Common myeloid progenitor, CD34-positive (primary cell): ENCODE measurements at regions of chr10 and their contacts with region 1.

Region 1: GRCh38 chr10:6401562-6402348 is 178.3 kb downstream of the PRKCQ start:
- DNase-seq: peak; percentile 74 to 82 (median 78)
- H3K4me3 ChIP-seq: peak overlapping the region in 5 of 7 experiments; percentile 7 to 70 (median 46)
- H3K27ac ChIP-seq: no peak overlapping the region
- H3K4me1 ChIP-seq: peaks cover 19 to 35% (median 30%) of the 10 kb centered on the region in 4 experiments
- H3K27me3 ChIP-seq: peaks cover 0 to 2% (median 0%) of the 10 kb centered on the region in 5 experiments

Region 2: DNA sequence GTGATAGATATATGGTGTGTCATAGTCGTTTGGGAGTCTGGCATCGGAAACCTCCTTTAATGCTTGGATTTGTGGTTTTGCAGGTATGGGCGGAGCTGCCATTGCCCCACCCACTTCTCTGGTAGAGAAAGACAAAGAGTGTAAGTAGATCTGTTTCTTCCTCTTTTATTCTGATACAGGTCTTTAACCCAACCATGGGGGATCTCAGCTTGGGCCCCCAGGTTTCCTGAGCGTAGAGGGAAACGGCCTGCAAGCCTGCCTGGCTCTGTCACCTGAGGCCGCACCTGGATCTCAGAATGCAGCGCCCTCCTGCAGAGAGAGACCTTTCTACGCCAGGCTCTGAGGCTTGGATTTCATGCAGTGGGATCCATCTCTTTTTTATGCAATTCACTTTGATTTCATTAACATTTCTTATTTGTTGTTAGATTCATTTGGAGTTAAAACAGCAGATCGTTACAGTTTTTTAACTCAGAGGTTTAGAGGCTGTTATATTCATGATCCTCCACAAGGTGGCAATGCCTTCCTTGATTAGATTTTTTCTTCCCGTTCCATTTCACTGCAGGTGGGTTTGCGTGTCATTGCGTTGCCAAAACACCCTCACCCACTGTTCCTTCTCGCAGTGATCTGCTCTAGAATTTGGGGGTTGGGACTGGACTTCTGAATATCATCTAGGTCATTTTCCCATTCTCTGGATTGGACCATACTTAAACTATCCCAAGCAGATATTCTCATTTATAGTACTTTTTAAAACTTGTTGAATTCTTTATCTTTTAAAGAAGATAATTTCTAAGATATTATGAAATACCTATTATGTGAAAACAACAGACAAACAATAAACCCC is 292.9 kb before region 1 on chr10:
- CTCF ChIA-PET with region 1: interaction called, 71 read pairs
- POLR2A ChIA-PET with region 1: no interaction called
- DNase-seq: peak; percentile 64 to 81 (median 78)
- H3K4me3 ChIP-seq: no peak overlapping the region
- H3K27ac ChIP-seq: peak overlapping the region in 1 of 2 experiments; percentile 6
- H3K4me1 ChIP-seq: peaks cover 0 to 9% (median 4%) of the 10 kb centered on the region in 4 experiments
- H3K27me3 ChIP-seq: no peaks in the 10 kb centered on the region

Region 3: DNA sequence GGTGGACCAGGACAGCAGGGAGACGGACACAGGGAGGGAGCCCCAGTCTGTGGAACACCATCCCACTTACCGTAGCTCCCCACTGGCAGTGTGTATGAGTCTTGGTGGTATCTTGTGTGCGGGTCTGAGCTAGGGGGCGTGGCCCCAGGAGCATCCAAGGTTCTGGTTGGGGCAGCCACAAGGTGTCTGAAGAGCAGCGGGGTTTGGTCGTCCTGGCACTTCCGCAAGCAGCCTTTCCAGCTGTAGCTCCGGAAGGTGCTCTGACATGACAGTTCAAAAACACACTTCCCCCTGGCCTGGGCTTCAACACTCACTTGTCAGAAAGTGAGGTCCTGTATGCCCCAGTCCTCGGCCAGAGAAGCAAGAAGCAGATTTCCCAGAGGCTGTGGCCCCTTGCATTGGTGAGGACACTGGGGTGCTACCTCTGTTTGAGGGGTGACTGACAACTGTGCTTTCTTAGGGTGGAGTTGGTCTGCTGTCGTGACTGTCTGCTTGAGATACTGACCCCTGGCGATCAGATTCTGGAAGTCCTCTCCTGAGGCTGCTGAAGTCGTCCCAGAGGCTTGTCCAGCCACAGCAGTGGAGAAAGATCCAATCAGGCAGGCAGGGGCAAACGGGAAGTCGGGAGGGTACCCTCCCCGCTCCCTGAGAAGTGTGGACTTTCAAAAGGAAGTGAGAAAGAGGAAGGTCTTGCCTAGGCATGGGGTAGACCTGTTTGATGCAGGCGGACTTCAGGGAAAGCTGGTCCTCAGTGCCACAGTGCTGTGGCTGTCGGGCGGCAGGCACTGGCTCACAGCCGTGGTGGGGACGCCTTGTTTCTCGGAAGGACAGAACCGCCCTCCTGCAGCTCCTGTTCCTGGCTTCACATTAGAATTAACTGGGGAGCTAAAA is 250.4 kb before region 1 on chr10:
- CTCF ChIA-PET with region 1: interaction called, 29 read pairs
- POLR2A ChIA-PET with region 1: no interaction called
- DNase-seq: peak; percentile 88 to 95 (median 92)
- H3K4me3 ChIP-seq: peak overlapping the region in 6 of 7 experiments; percentile 19 to 76 (median 56)
- H3K27ac ChIP-seq: peak overlapping the region; percentile 33 to 67
- H3K4me1 ChIP-seq: peaks cover 14 to 73% (median 59%) of the 10 kb centered on the region in 4 experiments
- H3K27me3 ChIP-seq: no peaks in the 10 kb centered on the region

Region 4: DNA sequence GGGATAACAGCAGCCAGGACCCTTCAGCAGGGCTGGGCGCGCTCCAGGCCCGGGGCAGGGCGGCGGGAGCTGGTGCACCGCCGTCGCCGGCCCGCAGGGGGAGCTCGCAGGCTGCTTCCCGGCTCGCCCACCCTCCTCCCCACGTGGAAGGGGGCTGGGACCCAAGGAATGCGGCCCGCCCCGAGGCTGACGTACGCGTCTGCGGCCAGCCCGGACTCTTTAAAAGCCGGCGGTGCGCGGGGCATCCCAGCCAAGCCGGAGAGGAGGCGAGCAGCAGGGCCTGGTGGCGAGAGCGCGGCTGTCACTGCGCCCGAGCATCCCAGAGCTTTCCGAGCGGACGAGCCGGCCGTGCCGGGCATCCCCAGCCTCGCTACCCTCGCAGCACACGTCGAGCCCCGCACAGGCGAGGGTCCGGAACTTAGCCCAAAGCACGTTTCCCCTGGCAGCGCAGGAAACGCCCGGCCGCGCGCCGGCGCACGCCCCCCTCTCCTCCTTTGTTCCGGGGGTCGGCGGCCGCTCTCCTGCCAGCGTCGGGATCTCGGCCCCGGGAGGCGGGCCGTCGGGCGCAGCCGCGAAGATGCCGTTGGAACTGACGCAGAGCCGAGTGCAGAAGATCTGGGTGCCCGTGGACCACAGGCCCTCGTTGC is 198.9 kb before region 1 on chr10 and contains the start of gene PFKFB3:
- CTCF ChIA-PET with region 1: interaction called, 92 read pairs
- POLR2A ChIA-PET with region 1: interaction called, 24 read pairs
- DNase-seq: peak; percentile 87 to 93 (median 92)
- H3K4me3 ChIP-seq: peak within 1 kb of the TSS; percentile 65 to 83 (median 73)
- H3K27ac ChIP-seq: no peak within 1 kb of the TSS
- H3K4me1 ChIP-seq: peaks cover 0 to 43% (median 39%) of the 10 kb centered on the region in 4 experiments
- H3K27me3 ChIP-seq: peaks cover 0 to 5% (median 4%) of the 10 kb centered on the region in 5 experiments

Region 5: GRCh38 chr10:6348096-6348874 is 53.5 kb before region 1 on chr10:
- CTCF ChIA-PET with region 1: interaction called, 18 read pairs
- POLR2A ChIA-PET with region 1: interaction called, 3 read pairs
- DNase-seq: peak; percentile 90 to 99 (median 97)
- H3K4me3 ChIP-seq: peak overlapping the region in 3 of 7 experiments; percentile 38 to 55 (median 40)
- H3K27ac ChIP-seq: peak overlapping the region; percentile 81 to 82
- H3K4me1 ChIP-seq: peaks cover 15 to 33% (median 24%) of the 10 kb centered on the region in 4 experiments
- H3K27me3 ChIP-seq: no peaks in the 10 kb centered on the region

Region 6: GRCh38 chr10:6388261-6388893 is 13.4 kb before region 1 on chr10:
- CTCF ChIA-PET with region 1: interaction called, 19 read pairs
- POLR2A ChIA-PET with region 1: no interaction called
- DNase-seq: no peak
- H3K4me3 ChIP-seq: no peak overlapping the region
- H3K27ac ChIP-seq: no peak overlapping the region
- H3K4me1 ChIP-seq: no peaks in the 10 kb centered on the region
- H3K27me3 ChIP-seq: no peaks in the 10 kb centered on the region

Region 7: GRCh38 chr10:6493521-6494441 is 92.0 kb after region 1 on chr10:
- CTCF ChIA-PET with region 1: no interaction called
- POLR2A ChIA-PET with region 1: no interaction called
- DNase-seq: peak in 2 of 3 donors; percentile 48 to 54
- H3K4me3 ChIP-seq: no peak overlapping the region
- H3K27ac ChIP-seq: no peak overlapping the region
- H3K4me1 ChIP-seq: peaks cover 0 to 32% (median 15%) of the 10 kb centered on the region in 4 experiments
- H3K27me3 ChIP-seq: no peaks in the 10 kb centered on the region

Region 8: DNA sequence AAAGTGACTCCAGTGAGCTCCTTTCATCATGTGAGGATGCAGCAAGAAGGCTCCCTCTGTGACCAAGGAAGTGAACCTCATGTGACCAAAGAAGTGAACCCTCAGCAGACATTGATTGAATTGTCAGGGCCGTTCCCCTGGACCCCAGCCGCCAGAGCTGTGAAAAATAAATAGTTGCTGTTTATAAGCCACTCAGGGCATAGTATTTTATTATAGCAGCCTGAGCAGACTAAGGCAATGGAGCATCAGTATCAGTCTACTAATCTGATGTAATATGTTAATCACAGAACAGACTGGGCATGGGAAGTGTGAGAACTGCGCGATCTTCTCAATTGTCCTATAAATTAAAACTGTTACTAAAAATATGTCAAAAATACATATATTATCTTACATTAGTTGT is 562.8 kb after region 1 on chr10:
- CTCF ChIA-PET with region 1: no interaction called
- POLR2A ChIA-PET with region 1: no interaction called
- DNase-seq: no peak
- H3K4me3 ChIP-seq: no peak overlapping the region
- H3K27ac ChIP-seq: no peak overlapping the region
- H3K4me1 ChIP-seq: peaks cover 0 to 3% (median 0%) of the 10 kb centered on the region in 4 experiments
- H3K27me3 ChIP-seq: no peaks in the 10 kb centered on the region